Heart right ventricle (tissue), 16 donors: ENCODE measurements at regions of chr2 and their contacts with region 1.

Region 1: DNA sequence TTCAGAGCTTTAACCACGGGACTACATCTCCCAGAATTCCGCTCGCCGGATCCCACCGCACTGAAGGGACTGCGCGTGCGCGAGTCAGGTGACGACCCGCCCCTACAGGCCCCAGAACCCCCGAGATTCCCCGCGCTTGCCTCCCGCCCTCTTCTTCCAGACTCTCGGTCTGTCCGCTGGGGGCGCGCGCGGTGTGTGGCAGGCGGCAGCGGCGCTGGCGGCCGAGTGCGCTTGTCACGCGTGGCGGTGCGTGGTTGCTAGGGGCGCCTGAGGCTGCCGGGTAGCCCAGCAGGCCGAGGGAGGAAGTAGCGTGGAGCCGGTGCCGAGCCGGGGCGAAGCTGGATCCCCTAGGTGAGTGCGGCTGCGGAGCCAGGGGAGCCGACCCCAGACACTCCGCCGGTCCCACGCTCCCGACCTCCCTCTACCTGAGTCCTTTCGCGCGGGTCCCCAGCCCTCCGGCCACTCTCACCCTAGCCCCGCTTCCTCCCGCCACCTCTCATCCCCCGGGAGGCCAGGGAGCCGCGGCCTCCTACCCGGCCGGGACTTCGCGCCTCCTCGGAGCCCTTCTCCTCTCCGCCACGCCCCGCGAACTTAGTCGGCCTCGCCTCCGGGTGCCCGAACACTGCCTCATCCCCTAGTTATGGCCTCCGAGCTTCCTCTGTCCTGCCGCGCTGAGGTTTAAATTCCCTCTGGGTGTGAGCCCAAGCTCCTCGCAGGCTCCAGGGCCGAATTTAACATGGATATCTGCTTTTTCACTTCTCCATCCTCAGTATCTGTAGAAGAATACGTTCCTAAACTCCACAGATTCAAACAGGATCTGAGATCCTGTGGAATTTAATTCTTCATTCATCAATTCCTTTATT is at the start of gene TTLL4:
- DNase-seq: peak; percentile 98 to 99
- ATAC-seq: peak; percentile 98 to 100 (median 99)
- H3K4me3 ChIP-seq: peak within 1 kb of the TSS; percentile 70 to 94 (median 82)
- H3K27ac ChIP-seq: peak within 1 kb of the TSS; percentile 63 to 94 (median 90)
- H3K4me1 ChIP-seq: peaks cover 0 to 47% (median 12%) of the 10 kb centered on the region in 9 donors
- H3K27me3 ChIP-seq: no peaks in the 10 kb centered on the region
- CTCF ChIP-seq: peak; percentile 78 to 98 (median 90)
- total RNA-seq, gene TTLL4: 4.3 to 8.2 (median 6.4) TPM

Region 2: GRCh38 chr2:218448934-218449333 is 262.0 kb before region 1 on chr2:
- intact Hi-C with region 1: no loop called
- DNase-seq: no peak
- ATAC-seq: no peak
- H3K4me3 ChIP-seq: no peak overlapping the region
- H3K27ac ChIP-seq: no peak overlapping the region
- H3K4me1 ChIP-seq: no peaks in the 10 kb centered on the region
- H3K27me3 ChIP-seq: no peaks in the 10 kb centered on the region
- CTCF ChIP-seq: no peak

Region 3: GRCh38 chr2:218568190-218569037 is 142.5 kb before region 1 on chr2 and contains the starts of genes CNOT9 and USP37:
- intact Hi-C with region 1: no loop called
- DNase-seq: peak; percentile 100
- ATAC-seq: peak; percentile 97 to 99 (median 98)
- H3K4me3 ChIP-seq: peak within 1 kb of the TSS; percentile 61 to 96 (median 84)
- H3K27ac ChIP-seq: peak within 1 kb of the TSS; percentile 68 to 97 (median 94)
- H3K4me1 ChIP-seq: peaks cover 8 to 49% (median 45%) of the 10 kb centered on the region in 9 donors
- H3K27me3 ChIP-seq: no peaks in the 10 kb centered on the region
- CTCF ChIP-seq: no peak
- total RNA-seq, gene CNOT9: 15.7 to 28.2 (median 21.1) TPM
- total RNA-seq, gene USP37: 6.3 to 11.1 (median 8.5) TPM

Region 4: GRCh38 chr2:218781691-218782527 is 71.0 kb after region 1 on chr2 and contains the start of gene CYP27A1:
- intact Hi-C with region 1: loop called in 1 of 10 experiments (anchors 10 kb)
- DNase-seq: peak; percentile 46 to 56
- ATAC-seq: peak; percentile 85 to 93 (median 90)
- H3K4me3 ChIP-seq: peak within 1 kb of the TSS; percentile 34 to 89 (median 73)
- H3K27ac ChIP-seq: peak within 1 kb of the TSS; percentile 63 to 86 (median 84)
- H3K4me1 ChIP-seq: peaks cover 0 to 31% (median 10%) of the 10 kb centered on the region in 9 donors
- H3K27me3 ChIP-seq: peaks cover 0 to 30% (median 0%) of the 10 kb centered on the region in 7 donors
- CTCF ChIP-seq: no peak
- total RNA-seq, gene CYP27A1: 3.7 to 12.8 (median 7.1) TPM

Region 5: GRCh38 chr2:218832520-218832919 is 121.6 kb after region 1 on chr2:
- intact Hi-C with region 1: loop called in 1 of 10 experiments (anchors 10 kb)
- DNase-seq: peak; percentile 34 to 49
- ATAC-seq: peak; percentile 69 to 86 (median 78)
- H3K4me3 ChIP-seq: no peak overlapping the region
- H3K27ac ChIP-seq: peak overlapping the region in 9 of 10 donors; percentile 5 to 87 (median 67)
- H3K4me1 ChIP-seq: peaks cover 0 to 28% (median 13%) of the 10 kb centered on the region in 9 donors
- H3K27me3 ChIP-seq: peaks cover 0 to 65% (median 32%) of the 10 kb centered on the region in 7 donors
- CTCF ChIP-seq: no peak